ENCODE measurements at regions of chr11 and their contacts with region 1.

Region 1: DNA sequence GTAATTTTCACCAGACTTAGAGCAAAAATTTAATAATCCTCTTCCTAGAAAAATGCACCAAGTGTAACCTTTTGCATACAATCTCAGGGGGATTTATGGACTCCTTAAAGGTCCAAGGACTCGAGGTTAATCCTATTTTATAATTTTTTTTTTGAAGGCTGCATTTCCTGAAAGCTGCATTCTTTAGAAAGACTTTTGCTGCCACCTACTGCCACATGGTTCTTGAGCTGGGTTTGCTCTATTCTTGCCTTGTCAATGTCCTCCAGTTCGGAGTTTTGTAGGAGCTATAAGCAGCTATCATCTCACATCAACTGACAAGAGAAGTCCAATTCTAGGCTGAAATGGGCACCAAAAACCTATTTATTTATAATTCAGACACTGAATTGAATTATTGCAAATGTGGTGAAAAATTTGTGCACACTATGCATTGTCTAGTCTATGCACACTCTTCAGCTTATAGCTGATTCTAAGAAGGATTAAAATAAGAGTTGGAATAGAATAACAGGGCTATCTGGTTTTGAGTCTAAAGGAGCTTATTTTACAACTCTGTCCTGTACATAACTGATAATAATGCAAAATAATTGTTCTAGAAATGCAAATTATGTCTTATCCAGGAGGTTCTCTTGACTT is 31.3 kb downstream of the TRAF6 start:
- DNase-seq: peak in 1 of 2 donors; percentile 62
- ATAC-seq: peak; percentile 28 to 83 (median 68)
- H3K4me3 ChIP-seq: no peak overlapping the region
- H3K27ac ChIP-seq: no peak overlapping the region
- H3K4me1 ChIP-seq: peaks cover 0 to 29% (median 0%) of the 10 kb centered on the region in 9 donors
- H3K27me3 ChIP-seq: no peaks in the 10 kb centered on the region
- CTCF ChIP-seq: peak; percentile 13 to 84 (median 64)

Region 2: GRCh38 chr11:36041988-36042611 is 436.7 kb before region 1 on chr11:
- intact Hi-C with region 1: loop called in 1 of 10 experiments (anchors 5 kb)
- DNase-seq: no peak
- ATAC-seq: peak in 2 of 8 donors; percentile 50 to 58
- H3K4me3 ChIP-seq: no peak overlapping the region
- H3K27ac ChIP-seq: no peak overlapping the region
- H3K4me1 ChIP-seq: peaks cover 0 to 7% (median 0%) of the 10 kb centered on the region in 9 donors
- H3K27me3 ChIP-seq: no peaks in the 10 kb centered on the region
- CTCF ChIP-seq: peak; percentile 15 to 64 (median 53)

Region 3: GRCh38 chr11:36292311-36292722 is 186.5 kb before region 1 on chr11:
- intact Hi-C with region 1: loop called in 9 of 10 experiments (anchors 1 to 10 kb)
- DNase-seq: no peak
- ATAC-seq: no peak
- H3K4me3 ChIP-seq: no peak overlapping the region
- H3K27ac ChIP-seq: no peak overlapping the region
- H3K4me1 ChIP-seq: peaks cover 0 to 20% (median 13%) of the 10 kb centered on the region in 9 donors
- H3K27me3 ChIP-seq: no peaks in the 10 kb centered on the region
- CTCF ChIP-seq: peak in 8 of 9 donors; percentile 15 to 63 (median 54)

Region 4: DNA sequence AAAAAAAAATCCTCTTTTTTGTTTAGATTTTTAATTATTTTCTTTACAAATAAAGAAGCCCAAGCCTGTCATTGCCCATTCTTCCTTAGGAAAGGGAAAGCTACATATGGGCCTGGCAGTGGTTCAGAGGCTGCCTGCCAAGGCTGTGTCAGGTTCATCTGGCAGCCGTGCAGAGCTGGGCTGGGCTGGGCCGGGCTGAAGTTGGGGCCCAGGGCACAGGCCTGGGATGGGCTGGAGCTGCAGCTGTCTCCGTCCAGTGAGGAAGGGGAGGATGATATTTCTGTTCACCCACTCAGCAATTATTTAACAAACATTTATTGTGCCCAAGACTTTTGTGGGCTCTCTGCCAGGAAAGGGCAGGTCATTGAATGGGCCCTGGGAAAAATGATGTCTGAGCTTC is 178.2 kb before region 1 on chr11:
- intact Hi-C with region 1: loop called in 5 of 10 experiments (anchors 5 to 10 kb)
- DNase-seq: peak; percentile 48 to 69
- ATAC-seq: peak; percentile 73 to 97 (median 92)
- H3K4me3 ChIP-seq: no peak overlapping the region
- H3K27ac ChIP-seq: no peak overlapping the region
- H3K4me1 ChIP-seq: peaks cover 0 to 17% (median 3%) of the 10 kb centered on the region in 9 donors
- H3K27me3 ChIP-seq: no peaks in the 10 kb centered on the region
- CTCF ChIP-seq: no peak

Region 5: DNA sequence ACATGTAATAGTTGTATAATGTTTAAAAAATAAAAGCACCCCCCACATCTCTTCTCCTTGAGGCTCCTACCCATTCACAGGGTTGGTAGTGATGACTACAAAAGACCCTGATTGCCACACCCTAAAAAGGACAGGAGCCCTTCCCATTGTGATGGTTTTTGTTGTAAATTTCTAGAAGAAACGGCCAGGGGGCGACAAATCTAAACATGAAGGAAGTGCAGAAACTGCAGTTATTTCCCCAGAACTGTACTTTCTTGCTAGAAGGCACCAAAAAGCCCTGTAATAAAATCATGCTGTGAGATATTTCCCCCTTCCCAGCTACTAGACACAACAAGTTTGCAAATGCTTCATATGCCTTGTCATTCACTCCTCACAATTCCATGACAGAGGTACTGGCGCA is 171.9 kb before region 1 on chr11:
- intact Hi-C with region 1: loop called in 4 of 10 experiments (anchors 2 to 5 kb)
- DNase-seq: no peak
- ATAC-seq: no peak
- H3K4me3 ChIP-seq: no peak overlapping the region
- H3K27ac ChIP-seq: no peak overlapping the region
- H3K4me1 ChIP-seq: peaks cover 0 to 12% (median 0%) of the 10 kb centered on the region in 9 donors
- H3K27me3 ChIP-seq: peaks cover 0 to 2% (median 0%) of the 10 kb centered on the region in 7 donors
- CTCF ChIP-seq: peak in 7 of 9 donors; percentile 23 to 54 (median 39)

Region 6: GRCh38 chr11:36361901-36362391 is 116.9 kb before region 1 on chr11:
- intact Hi-C with region 1: loop called in 1 of 10 experiments (anchors 10 kb)
- DNase-seq: no peak
- ATAC-seq: peak in 6 of 8 donors; percentile 27 to 75 (median 54)
- H3K4me3 ChIP-seq: peak overlapping the region in 5 of 10 donors; percentile 5 to 31 (median 20)
- H3K27ac ChIP-seq: peak overlapping the region in 1 of 10 donors; percentile 35
- H3K4me1 ChIP-seq: peaks cover 0 to 61% (median 0%) of the 10 kb centered on the region in 9 donors
- H3K27me3 ChIP-seq: peaks cover 0 to 6% (median 0%) of the 10 kb centered on the region in 7 donors
- CTCF ChIP-seq: no peak

Region 7: GRCh38 chr11:36376888-36377758 is 101.7 kb before region 1 on chr11:
- intact Hi-C with region 1: loop called in 1 of 10 experiments (anchors 5 kb)
- DNase-seq: peak; percentile 43 to 60
- ATAC-seq: peak; percentile 79 to 92 (median 84)
- H3K4me3 ChIP-seq: peak overlapping the region; percentile 45 to 88 (median 78)
- H3K27ac ChIP-seq: peak overlapping the region in 7 of 10 donors; percentile 28 to 87 (median 62)
- H3K4me1 ChIP-seq: peaks cover 0 to 54% (median 14%) of the 10 kb centered on the region in 9 donors
- H3K27me3 ChIP-seq: peaks cover 0 to 25% (median 15%) of the 10 kb centered on the region in 7 donors
- CTCF ChIP-seq: peak; percentile 33 to 81 (median 64)

Measured in heart right ventricle (tissue), 16 donors.